Posterior cingulate gyrus (tissue), 11 donors: ENCODE measurements at regions of chr7 and their contacts with region 1.

Region 1: GRCh38 chr7:98464558-98464940 is 63.7 kb upstream of the BAIAP2L1 start:
- DNase-seq: peak in 4 of 10 donors; percentile 19 to 79 (median 23)

Region 2: GRCh38 chr7:98569691-98570337 is 105.3 kb after region 1 on chr7:
- intact Hi-C with region 1: loop called (anchors 10 kb)
- DNase-seq: peak; percentile 43 to 94 (median 74)